Panc1 (cell line): ENCODE measurements at regions of chr11 and their contacts with region 1.

Region 1: GRCh38 chr11:47071791-47072261 is 104.9 kb downstream of the ARFGAP2 start:
- DNase-seq: no peak
- ATAC-seq: no peak; the same call in 1 of the 2 replicates
- H3K4me3 ChIP-seq: no peak overlapping the region
- H3K27ac ChIP-seq: 0 out of 2 replicates have a peak overlapping the region, but pooled peaks have one; percentile 25
- H3K4me1 ChIP-seq: no peaks in the 10 kb centered on the region
- H3K27me3 ChIP-seq: no peaks in the 10 kb centered on the region
- CTCF ChIP-seq: no peak

Region 2: GRCh38 chr11:45993531-45994001 is 1078.3 kb before region 1 on chr11:
- CTCF ChIA-PET with region 1: interaction called, 21 read pairs
- POLR2A ChIA-PET with region 1: no interaction called
- in situ Hi-C with region 1: no loop called
- intact Hi-C with region 1: no loop called
- DNase-seq: no peak
- ATAC-seq: no peak
- H3K4me3 ChIP-seq: no peak overlapping the region
- H3K27ac ChIP-seq: no peak overlapping the region
- H3K4me1 ChIP-seq: no peaks in the 10 kb centered on the region
- H3K27me3 ChIP-seq: no peaks in the 10 kb centered on the region
- CTCF ChIP-seq: no peak

Region 3: GRCh38 chr11:46845740-46846509 is 225.9 kb before region 1 on chr11 and contains the start of gene CKAP5:
- CTCF ChIA-PET with region 1: no interaction called
- POLR2A ChIA-PET with region 1: no interaction called
- in situ Hi-C with region 1: no loop called
- intact Hi-C with region 1: no loop called
- DNase-seq: peak; percentile 55
- ATAC-seq: peak; percentile 98
- H3K4me3 ChIP-seq: peak within 1 kb of the TSS; percentile 76 to 96
- H3K27ac ChIP-seq: peak within 1 kb of the TSS; percentile 94
- H3K4me1 ChIP-seq: peaks cover 12% of the 10 kb centered on the region
- H3K27me3 ChIP-seq: no peaks in the 10 kb centered on the region
- CTCF ChIP-seq: no peak
- total RNA-seq, gene CKAP5: 191 TPM

Region 4: GRCh38 chr11:46966773-46967172 is 105.1 kb before region 1 on chr11:
- CTCF ChIA-PET with region 1: no interaction called
- POLR2A ChIA-PET with region 1: interaction called, 19 read pairs
- in situ Hi-C with region 1: no loop called
- intact Hi-C with region 1: no loop called
- DNase-seq: no peak
- ATAC-seq: no peak
- H3K4me3 ChIP-seq: no peak overlapping the region
- H3K27ac ChIP-seq: no peak overlapping the region
- H3K4me1 ChIP-seq: no peaks in the 10 kb centered on the region
- H3K27me3 ChIP-seq: no peaks in the 10 kb centered on the region
- CTCF ChIP-seq: no peak